ENCODE measurements at regions of chr7 and their contacts with region 1.

Region 1: GRCh38 chr7:81499262-81500116 is 270.4 kb downstream of the HGF start:
- DNase-seq: peak; percentile 47
- H3K4me3 ChIP-seq: no peak overlapping the region
- H3K27ac ChIP-seq: peak overlapping the region; percentile 75 to 84
- H3K4me1 ChIP-seq: peaks cover 8 to 9% of the 10 kb centered on the region in 2 experiments; a peak in 1 of 4 replicates
- H3K27me3 ChIP-seq: no peaks in the 10 kb centered on the region
- CTCF ChIP-seq: peak; percentile 99
- EP300 ChIP-seq: peak in 1 of 2 experiments; percentile 53; a peak in 2 of 4 replicates
- RAD21 ChIP-seq: peak; percentile 95

Region 2: GRCh38 chr7:81221527-81222217 is 277.8 kb before region 1 on chr7:
- CTCF ChIA-PET with region 1: no interaction called
- POLR2A ChIA-PET with region 1: no interaction called
- DNase-seq: no peak
- H3K4me3 ChIP-seq: no peak overlapping the region
- H3K27ac ChIP-seq: no peak overlapping the region
- H3K4me1 ChIP-seq: no peaks in the 10 kb centered on the region; a peak in 1 of 4 replicates
- H3K27me3 ChIP-seq: no peaks in the 10 kb centered on the region
- CTCF ChIP-seq: no peak
- EP300 ChIP-seq: no peak
- RAD21 ChIP-seq: no peak

Region 3: DNA sequence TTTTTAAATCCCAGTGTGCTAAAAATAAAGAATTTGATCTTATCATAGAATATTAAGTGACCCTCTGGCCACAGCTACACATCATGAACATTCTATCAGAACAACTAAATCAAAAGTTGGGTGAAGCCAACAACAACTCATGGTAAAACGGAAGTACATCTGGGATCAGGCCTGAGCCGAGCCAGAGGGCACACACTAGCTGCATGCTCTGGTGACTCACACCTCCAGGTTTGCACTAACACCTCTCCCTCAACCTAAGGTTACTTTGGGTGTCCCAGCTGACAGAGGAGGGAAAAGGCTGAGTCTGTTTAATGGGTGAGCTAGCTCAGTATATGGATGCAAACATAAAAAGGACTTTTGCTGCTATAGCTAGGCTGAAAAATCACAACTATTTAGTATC is 11.3 kb before region 1 on chr7:
- CTCF ChIA-PET with region 1: interaction called, 55 read pairs
- POLR2A ChIA-PET with region 1: no interaction called
- DNase-seq: no peak
- H3K4me3 ChIP-seq: no peak overlapping the region
- H3K27ac ChIP-seq: no peak overlapping the region
- H3K4me1 ChIP-seq: peaks cover 0 to 2% of the 10 kb centered on the region in 2 experiments; a peak in 2 of 4 replicates
- H3K27me3 ChIP-seq: no peaks in the 10 kb centered on the region
- CTCF ChIP-seq: no peak
- EP300 ChIP-seq: no peak
- RAD21 ChIP-seq: no peak

Region 4: DNA sequence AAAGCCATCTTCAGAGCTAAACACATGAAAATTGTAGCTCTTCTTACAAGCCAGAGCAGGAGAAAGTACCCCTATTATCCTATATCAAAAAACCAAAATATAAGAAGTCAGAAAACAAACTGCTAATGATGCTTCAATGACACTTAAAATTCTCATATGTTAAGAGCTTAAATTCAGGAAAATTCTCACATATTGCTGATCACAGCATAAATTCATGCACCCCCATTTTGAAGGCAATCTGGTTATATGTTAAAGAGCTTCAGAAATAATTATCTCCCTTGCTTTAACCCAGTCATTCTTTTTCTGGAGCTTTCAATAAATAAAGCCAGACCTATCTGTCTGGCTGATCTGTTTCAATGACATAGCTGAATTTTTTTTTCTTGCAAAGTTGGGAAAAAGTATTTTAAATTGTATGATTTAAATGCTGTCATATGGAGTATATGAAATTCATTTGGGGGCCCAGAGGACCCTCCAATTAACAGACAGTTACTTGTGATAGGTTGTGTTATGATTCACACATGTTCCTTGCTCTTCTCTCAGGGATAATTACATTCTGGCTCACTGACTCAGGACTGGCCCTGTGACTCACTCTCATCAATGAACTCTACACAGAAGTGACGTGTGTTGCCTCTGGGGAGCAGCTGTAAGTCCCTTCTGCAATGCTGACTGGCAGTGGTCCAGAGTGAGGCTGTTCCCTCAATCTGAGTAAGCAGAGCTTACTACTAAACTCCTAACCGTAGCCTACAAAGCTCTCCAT is 185.2 kb after region 1 on chr7:
- CTCF ChIA-PET with region 1: interaction called, 18 read pairs
- POLR2A ChIA-PET with region 1: no interaction called
- DNase-seq: peak; percentile 63
- H3K4me3 ChIP-seq: peak overlapping the region in 1 of 2 experiments; percentile 14; a peak in 1 of 4 replicates
- H3K27ac ChIP-seq: peak overlapping the region; percentile 91 to 100
- H3K4me1 ChIP-seq: peaks cover 15 to 42% of the 10 kb centered on the region in 2 experiments; a peak in 3 of 4 replicates
- H3K27me3 ChIP-seq: no peaks in the 10 kb centered on the region
- CTCF ChIP-seq: no peak
- EP300 ChIP-seq: peak; percentile 94 to 99
- RAD21 ChIP-seq: peak; percentile 51

Region 5: DNA sequence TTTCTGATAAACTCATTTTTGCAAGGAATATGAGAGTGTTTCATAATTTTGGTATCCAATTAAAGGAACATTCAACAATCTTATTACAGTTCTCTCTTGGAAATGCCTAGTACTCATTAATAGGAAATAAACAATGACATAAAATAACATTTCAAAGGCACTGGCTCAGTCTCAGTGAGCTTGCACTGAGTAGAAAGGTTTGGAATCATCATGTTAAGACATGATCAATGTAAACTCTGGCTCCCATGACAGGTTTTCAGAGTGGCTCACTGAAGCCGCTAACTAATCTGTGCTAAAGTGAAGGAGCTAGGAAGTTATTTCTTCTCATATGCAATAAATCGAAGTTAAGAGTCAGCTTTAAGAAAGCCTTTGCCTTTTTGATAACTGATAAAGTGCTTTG is 473.6 kb after region 1 on chr7:
- CTCF ChIA-PET with region 1: interaction called, 15 read pairs
- POLR2A ChIA-PET with region 1: no interaction called
- DNase-seq: no peak
- H3K4me3 ChIP-seq: no peak overlapping the region
- H3K27ac ChIP-seq: no peak overlapping the region
- H3K4me1 ChIP-seq: no peaks in the 10 kb centered on the region
- H3K27me3 ChIP-seq: no peaks in the 10 kb centered on the region
- CTCF ChIP-seq: no peak
- EP300 ChIP-seq: no peak
- RAD21 ChIP-seq: no peak

Region 6: DNA sequence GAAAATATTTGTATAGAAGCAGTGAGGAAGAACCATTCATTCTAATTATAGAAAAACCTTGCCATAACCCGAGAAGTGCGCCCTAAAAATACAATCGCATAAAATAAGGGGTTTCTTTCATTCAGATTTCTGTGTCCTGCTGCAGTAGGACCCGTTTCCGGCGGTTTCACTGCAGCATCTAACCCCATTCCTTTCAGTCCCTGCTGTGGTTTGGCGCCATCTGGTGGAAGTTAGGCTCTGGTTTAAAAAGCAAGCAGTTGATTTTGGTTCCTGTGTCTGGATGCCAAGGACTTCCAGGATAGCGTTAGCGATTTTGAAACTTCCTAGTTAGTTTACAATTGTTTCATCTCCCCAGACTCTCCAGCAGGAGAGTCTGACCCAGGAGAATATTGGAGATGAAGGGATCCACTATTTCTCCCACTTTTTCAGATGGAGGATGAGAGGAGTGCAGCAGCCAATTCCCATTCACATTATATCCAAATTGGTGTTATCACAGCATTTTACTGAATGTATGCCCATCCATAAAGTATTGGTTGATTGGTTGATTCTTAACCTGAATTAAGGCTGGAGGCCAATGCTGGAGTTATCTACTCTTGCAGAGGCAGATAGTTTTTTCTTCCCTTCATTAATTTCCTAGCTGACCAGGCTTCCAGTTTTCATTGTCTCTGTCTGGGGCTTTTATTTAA is 1072.8 kb after region 1 on chr7:
- CTCF ChIA-PET with region 1: interaction called, 20 read pairs
- POLR2A ChIA-PET with region 1: no interaction called
- DNase-seq: peak; percentile 89
- H3K4me3 ChIP-seq: peak overlapping the region; percentile 18 to 27; a peak in 2 of 4 replicates
- H3K27ac ChIP-seq: peak overlapping the region in 1 of 2 experiments; percentile 25; a peak in 1 of 4 replicates
- H3K4me1 ChIP-seq: peaks cover 4 to 11% of the 10 kb centered on the region in 2 experiments; a peak in 2 of 4 replicates
- H3K27me3 ChIP-seq: no peaks in the 10 kb centered on the region
- CTCF ChIP-seq: peak; percentile 100
- EP300 ChIP-seq: peak in 1 of 2 experiments; percentile 52; a peak in 2 of 4 replicates
- RAD21 ChIP-seq: peak; percentile 100

Region 7: DNA sequence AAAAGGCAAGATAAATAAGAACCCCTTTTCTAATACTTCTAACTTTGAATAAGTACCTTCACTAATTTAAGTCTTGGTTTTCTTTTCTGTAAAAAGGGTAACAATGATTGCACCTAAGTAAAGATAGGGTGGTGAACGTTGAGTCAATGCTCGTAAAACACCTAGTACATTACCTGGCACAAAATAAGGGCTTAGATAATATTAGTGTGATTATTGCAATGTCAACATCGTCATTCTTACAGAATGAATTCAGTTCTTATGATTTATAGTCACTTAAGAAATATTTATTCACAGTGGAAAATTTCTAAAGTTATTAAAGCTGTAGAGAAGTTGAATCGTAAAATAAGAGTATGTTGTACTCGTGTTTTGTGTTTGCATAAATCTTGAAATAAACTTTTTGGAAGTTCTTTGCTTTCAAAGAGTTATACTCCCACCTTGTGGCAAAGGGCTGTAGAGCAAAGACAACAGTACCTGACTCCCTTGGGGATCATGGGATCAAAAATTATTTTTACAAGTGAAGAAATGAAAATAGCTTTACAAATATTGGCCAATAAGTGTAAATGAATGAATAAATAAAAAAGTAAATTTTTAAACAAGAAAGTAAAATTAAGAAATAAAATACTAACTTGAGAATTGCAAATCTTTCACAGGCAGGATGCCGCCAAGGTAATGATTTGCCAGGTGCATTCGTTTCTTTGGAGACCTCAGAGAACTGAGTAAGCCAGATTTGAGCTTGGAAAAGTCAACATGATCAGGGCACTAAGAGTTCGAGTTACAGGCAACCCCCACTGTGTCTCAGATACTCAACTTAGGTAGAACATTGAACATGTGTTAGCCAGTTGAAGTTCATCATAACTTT is 1229.9 kb after region 1 on chr7:
- CTCF ChIA-PET with region 1: interaction called, 40 read pairs
- POLR2A ChIA-PET with region 1: no interaction called
- DNase-seq: peak; percentile 52
- H3K4me3 ChIP-seq: no peak overlapping the region; a peak in 1 of 4 replicates
- H3K27ac ChIP-seq: no peak overlapping the region
- H3K4me1 ChIP-seq: peaks cover 0 to 3% of the 10 kb centered on the region in 2 experiments; a peak in 1 of 4 replicates
- H3K27me3 ChIP-seq: no peaks in the 10 kb centered on the region
- CTCF ChIP-seq: peak; percentile 99
- EP300 ChIP-seq: no peak
- RAD21 ChIP-seq: peak; percentile 93